Endothelial cell of umbilical vein (primary cell): ENCODE measurements at regions of chr1 and their contacts with region 1.

Region 1: GRCh38 chr1:204746838-204747442 is 61.4 kb upstream of the LRRN2 start:
- DNase-seq: peak; percentile 43
- H3K4me3 ChIP-seq: no peak overlapping the region
- H3K27ac ChIP-seq: no peak overlapping the region
- H3K4me1 ChIP-seq: no peaks in the 10 kb centered on the region
- H3K27me3 ChIP-seq: peaks cover 2 to 3% of the 10 kb centered on the region in 2 experiments
- CTCF ChIP-seq: peak; percentile 80 to 96
- POLR2A ChIP-seq: no peak

Region 2: GRCh38 chr1:204723131-204723787 is 23.7 kb before region 1 on chr1:
- CTCF ChIA-PET with region 1: interaction called, 15 read pairs
- POLR2A ChIA-PET with region 1: no interaction called
- dilution Hi-C with region 1: no loop called
- intact Hi-C with region 1: no loop called
- DNase-seq: no peak
- H3K4me3 ChIP-seq: no peak overlapping the region
- H3K27ac ChIP-seq: no peak overlapping the region
- H3K4me1 ChIP-seq: no peaks in the 10 kb centered on the region
- H3K27me3 ChIP-seq: peaks cover 0 to 2% of the 10 kb centered on the region in 2 experiments
- CTCF ChIP-seq: no peak
- POLR2A ChIP-seq: no peak

Region 3: DNA sequence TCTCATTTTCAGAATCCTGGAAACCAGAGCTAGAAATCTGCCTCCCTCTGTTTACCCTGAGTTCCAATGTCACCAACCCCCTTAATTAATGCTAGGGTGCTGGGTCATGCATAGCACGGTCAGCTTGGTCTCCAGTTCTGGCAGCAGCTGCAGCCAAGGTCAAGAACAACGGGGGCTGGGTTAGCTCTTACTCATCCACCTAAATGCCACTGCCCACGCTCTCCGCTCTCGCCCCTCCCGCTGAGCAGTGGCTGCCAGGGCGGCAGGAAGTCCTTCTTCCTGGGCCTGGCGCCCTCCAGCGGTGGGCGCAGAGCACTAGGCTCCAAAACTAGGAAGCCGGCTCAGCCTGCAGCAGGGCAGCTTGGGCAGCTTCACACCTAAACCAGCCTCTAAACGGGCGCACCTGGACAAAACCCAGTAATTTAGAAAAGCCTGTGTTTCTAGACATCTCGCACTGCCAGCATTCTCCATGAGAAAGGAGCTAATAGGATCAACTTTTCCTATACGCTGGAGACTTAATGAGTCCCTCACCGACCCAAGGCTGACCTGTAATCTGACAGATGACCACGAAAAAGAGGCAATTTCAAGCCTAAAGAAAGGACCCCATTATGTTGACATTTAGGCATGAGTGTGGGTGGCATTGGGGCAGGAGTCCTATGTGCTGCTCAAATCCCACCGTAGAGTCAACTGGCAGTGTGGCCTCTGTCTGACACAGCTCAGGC is 16.9 kb after region 1 on chr1:
- CTCF ChIA-PET with region 1: interaction called, 25 read pairs
- POLR2A ChIA-PET with region 1: no interaction called
- dilution Hi-C with region 1: no loop called
- intact Hi-C with region 1: no loop called
- DNase-seq: peak; percentile 53
- H3K4me3 ChIP-seq: no peak overlapping the region
- H3K27ac ChIP-seq: no peak overlapping the region
- H3K4me1 ChIP-seq: no peaks in the 10 kb centered on the region
- H3K27me3 ChIP-seq: peaks cover 3 to 16% of the 10 kb centered on the region in 2 experiments
- CTCF ChIP-seq: peak; percentile 80 to 87
- POLR2A ChIP-seq: no peak